Naive thymus-derived CD4-positive, alpha-beta T cell (primary cell): ENCODE measurements at regions of chr6 and their contacts with region 1.

Region 1: DNA sequence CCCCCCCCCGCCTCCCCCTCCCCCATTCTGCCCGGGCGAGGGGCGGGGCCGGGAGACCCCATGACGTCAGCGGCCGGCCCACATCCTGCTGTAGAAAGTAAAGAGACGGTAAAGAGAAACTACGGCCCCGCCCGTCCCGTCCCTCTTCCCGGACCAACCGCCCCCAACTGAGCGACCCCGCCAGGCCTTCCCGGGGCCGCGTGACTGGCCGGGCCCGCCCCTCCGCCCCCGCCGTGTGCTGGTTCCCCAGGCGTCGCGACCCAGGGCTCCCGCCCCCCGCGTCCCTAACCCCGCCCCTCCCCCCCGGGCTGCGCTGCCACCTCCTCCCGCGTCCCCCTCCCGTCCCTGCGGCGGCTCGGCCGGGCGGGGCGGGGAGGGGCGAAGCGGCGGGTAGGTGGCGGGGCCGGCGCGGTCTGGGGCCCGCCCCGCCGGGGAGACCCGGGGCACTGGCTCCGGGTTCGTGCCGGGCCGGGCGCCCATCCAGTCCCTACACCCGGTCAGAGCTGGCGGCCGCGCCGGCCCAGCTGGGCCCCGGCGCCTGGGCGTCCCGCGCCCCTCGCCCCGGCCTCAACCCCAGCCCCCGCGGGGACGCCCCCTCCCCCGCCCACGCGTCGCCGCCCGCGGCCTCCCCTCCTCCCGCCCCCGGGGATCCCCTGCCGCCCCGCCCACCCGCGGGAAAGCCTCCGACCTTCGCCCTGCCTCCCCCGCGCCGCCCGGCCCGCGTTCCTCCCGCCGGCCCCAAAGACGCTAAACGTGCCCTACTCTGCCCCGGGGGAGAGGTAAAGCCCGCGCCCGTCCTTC is 636 bp upstream of the HIVEP1 start:
- DNase-seq: peak; percentile 83 to 99 (median 94)
- ATAC-seq: peak; percentile 83
- H3K4me3 ChIP-seq: no peak overlapping the region
- H3K4me3 Mint-ChIP-seq: peak overlapping the region; percentile 91 to 99 (median 94)
- H3K27ac ChIP-seq: peak overlapping the region; percentile 73
- H3K27ac Mint-ChIP-seq: peak overlapping the region; percentile 97 to 100 (median 98)
- H3K4me1 ChIP-seq: peaks cover 14 to 26% of the 10 kb centered on the region in 2 donors
- H3K4me1 Mint-ChIP-seq: peaks cover 15 to 68% (median 58%) of the 10 kb centered on the region in 7 donors
- H3K27me3 ChIP-seq: no peaks in the 10 kb centered on the region
- H3K27me3 Mint-ChIP-seq: peaks cover 0 to 5% (median 0%) of the 10 kb centered on the region in 5 donors

Region 2: DNA sequence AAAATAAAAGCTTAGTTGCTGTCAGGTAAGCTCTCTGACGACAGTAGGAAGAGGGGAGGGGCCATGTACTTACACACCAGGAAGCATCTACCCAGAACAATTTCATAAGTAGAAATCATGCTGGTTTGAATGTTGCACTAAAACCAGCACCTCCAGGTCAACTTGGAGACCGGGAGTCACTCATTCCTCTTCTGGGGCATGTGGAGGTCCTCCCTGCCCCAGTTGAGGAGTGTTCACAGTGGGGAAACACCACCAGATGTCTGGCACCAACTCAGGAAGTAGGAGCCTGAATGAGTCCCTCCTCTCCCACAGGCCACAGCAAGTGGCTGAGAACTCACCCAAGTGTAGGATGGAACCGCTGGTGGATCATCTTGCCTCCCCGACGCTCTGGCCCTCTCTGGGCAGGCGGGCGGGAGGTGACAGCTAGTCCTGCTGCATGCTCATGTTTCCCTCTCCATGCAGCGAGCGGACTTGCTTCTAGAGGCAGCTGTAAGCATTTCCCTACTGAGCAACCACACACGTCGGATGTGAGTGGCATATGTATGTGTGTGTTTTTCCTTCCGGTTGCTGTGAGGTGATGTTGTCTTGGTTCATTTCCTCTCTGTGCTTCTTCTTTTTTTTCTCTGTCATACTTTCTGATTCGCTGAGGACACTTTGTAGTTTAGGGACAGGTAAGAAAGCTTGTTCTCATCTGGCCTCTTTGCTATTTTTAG is 629.5 kb before region 1 on chr6:
- CTCF ChIA-PET with region 1: no interaction called
- POLR2A ChIA-PET with region 1: no interaction called
- intact Hi-C with region 1: loop called in 1 of 2 experiments (anchors 1 kb)
- DNase-seq: peak; percentile 43 to 88 (median 82)
- ATAC-seq: peak; percentile 95
- H3K4me3 ChIP-seq: peak overlapping the region; percentile 70
- H3K4me3 Mint-ChIP-seq: peak overlapping the region; percentile 76 to 96 (median 91)
- H3K27ac ChIP-seq: peak overlapping the region; percentile 79
- H3K27ac Mint-ChIP-seq: peak overlapping the region; percentile 79 to 94 (median 91)
- H3K4me1 ChIP-seq: peaks cover 23 to 28% of the 10 kb centered on the region in 2 donors
- H3K4me1 Mint-ChIP-seq: peaks cover 42 to 85% (median 66%) of the 10 kb centered on the region in 7 donors
- H3K27me3 ChIP-seq: no peaks in the 10 kb centered on the region
- H3K27me3 Mint-ChIP-seq: no peaks in the 10 kb centered on the region

Region 3: DNA sequence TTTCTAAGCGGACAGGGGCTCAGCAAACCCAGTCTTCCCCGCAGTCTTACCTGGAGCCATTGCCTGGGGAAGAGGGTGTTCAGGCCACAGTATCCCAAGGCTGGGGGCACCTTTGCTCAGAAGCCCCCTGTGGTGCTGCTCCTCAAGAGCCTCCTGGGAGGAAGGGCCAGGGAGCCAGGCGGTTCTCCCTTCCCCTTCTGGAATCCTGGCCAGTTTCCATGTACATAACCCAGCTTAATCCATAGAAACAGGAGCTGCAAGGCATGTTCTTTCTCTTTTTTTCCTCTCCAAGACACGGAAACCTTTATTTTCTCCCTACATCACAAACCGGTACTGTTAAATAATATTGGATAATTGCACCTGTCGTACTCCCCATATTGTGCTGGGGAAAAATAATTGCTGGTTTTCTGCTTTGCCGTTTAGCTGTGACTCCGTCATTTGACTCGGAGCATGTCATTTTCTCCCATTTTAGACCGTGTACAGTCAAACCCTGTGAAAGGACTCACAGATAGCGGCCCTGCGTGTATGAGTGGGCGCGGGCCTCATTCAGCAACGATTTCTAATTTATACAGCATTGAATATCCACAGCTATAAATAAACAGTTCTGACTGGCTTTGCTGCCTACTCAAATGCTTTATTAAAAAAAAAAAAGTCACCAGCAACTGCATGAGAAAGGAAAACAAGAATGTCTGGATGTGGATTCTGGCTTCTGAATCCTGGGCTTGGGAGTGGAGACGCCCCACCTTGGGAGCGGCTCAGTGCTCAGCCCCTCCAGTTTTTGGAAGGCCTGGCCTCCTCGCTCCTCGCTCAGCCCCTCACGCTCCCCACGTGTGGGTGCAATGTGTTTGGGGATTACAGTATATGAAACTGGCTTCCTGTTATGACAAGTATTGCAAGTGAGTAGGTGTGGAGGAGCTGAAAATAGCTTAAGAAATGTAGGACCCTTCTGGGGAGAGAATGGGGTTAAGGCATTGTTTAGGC is 300.2 kb before region 1 on chr6:
- CTCF ChIA-PET with region 1: interaction called, 4 read pairs
- POLR2A ChIA-PET with region 1: interaction called, 83 read pairs
- intact Hi-C with region 1: loop called (anchors 1 kb)
- DNase-seq: peak in 8 of 9 donors; percentile 22 to 79 (median 38)
- ATAC-seq: peak; percentile 28
- H3K4me3 ChIP-seq: peak overlapping the region; percentile 13
- H3K4me3 Mint-ChIP-seq: peak overlapping the region; percentile 71 to 86 (median 75)
- H3K27ac ChIP-seq: peak overlapping the region; percentile 67
- H3K27ac Mint-ChIP-seq: peak overlapping the region; percentile 90 to 100 (median 97)
- H3K4me1 ChIP-seq: peaks cover 16 to 84% of the 10 kb centered on the region in 2 donors
- H3K4me1 Mint-ChIP-seq: peaks cover 55 to 92% (median 89%) of the 10 kb centered on the region in 7 donors
- H3K27me3 ChIP-seq: no peaks in the 10 kb centered on the region
- H3K27me3 Mint-ChIP-seq: no peaks in the 10 kb centered on the region

Region 4: GRCh38 chr6:11975353-11975977 is 36.0 kb before region 1 on chr6:
- CTCF ChIA-PET with region 1: no interaction called
- POLR2A ChIA-PET with region 1: no interaction called
- intact Hi-C with region 1: loop called (anchors 1 kb)
- DNase-seq: peak in 1 of 9 donors; percentile 7
- ATAC-seq: peak; percentile 97
- H3K4me3 ChIP-seq: no peak overlapping the region
- H3K4me3 Mint-ChIP-seq: peak overlapping the region in 7 of 10 donors; percentile 8 to 73 (median 53)
- H3K27ac ChIP-seq: no peak overlapping the region
- H3K27ac Mint-ChIP-seq: peak overlapping the region in 7 of 9 donors; percentile 1 to 53 (median 23)
- H3K4me1 ChIP-seq: no peaks in the 10 kb centered on the region
- H3K4me1 Mint-ChIP-seq: peaks cover 7 to 40% (median 21%) of the 10 kb centered on the region in 7 donors
- H3K27me3 ChIP-seq: no peaks in the 10 kb centered on the region
- H3K27me3 Mint-ChIP-seq: peaks cover 0 to 2% (median 0%) of the 10 kb centered on the region in 5 donors

Region 5: DNA sequence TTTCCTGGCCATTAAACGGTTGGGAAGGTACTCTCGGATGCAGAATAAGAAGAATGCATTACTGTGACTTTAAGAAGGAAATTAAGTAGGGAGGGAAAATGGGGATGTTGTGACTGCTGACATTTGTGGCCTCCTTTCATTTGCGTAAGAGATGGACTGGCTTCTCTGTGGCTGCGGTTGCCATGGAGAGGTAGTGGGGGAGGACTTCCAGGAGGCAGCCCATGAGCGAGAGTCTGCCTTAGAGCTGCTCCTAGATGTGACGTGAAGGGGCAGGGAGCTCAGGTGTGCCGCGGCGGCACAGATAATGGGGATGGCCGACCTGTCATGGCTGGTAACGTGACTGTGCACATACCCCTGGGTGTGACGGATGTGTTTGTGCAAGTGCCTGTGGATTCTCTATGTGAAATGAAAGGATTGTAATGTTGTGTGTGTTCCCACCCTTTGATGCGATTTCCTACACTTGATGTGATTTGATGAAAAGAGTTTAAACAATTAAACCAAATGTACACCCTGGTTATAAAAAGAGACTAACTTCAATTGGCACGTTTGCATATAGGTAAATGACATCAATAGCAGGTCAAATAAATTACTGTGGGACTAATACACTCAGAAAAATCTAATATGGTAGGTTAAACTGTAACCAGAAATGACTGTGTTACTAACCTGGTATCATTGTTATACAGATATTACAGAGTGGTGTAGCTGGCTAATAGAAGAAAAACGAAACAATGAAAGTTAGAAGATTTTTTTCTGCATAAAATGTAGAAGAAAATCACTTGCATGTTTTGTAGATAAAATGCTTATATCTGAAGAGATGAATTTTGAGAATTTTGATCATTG is 49.5 kb after region 1 on chr6:
- CTCF ChIA-PET with region 1: interaction called, 4 read pairs
- POLR2A ChIA-PET with region 1: interaction called, 3 read pairs
- intact Hi-C with region 1: loop called in 1 of 2 experiments (anchors 1 kb)
- DNase-seq: peak; percentile 44 to 90 (median 76)
- ATAC-seq: peak; percentile 97
- H3K4me3 ChIP-seq: peak overlapping the region; percentile 24
- H3K4me3 Mint-ChIP-seq: peak overlapping the region; percentile 77 to 94 (median 84)
- H3K27ac ChIP-seq: peak overlapping the region; percentile 5
- H3K27ac Mint-ChIP-seq: peak overlapping the region in 8 of 9 donors; percentile 75 to 95 (median 88)
- H3K4me1 ChIP-seq: peaks cover 6 to 10% of the 10 kb centered on the region in 2 donors
- H3K4me1 Mint-ChIP-seq: peaks cover 42 to 78% (median 71%) of the 10 kb centered on the region in 7 donors
- H3K27me3 ChIP-seq: no peaks in the 10 kb centered on the region
- H3K27me3 Mint-ChIP-seq: no peaks in the 10 kb centered on the region

Region 6: DNA sequence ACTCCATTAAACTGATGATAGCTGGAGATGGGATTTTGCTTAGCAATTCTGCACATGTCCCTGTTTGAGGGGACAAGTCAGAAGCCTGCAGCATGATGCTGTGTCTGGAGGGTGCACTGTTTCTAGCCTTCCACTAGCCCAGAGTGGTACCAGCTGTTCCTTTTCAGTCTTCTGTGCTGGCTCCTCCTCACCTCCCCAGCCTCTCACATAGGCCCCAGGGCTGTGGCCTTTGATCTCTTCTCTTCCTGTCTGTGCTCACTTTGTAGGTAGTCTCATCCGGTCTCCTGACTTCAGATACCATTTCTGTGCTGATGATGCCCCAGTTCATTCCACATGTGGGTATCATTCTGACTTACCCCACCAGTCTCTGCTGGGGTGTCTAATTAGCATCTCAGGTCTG is 126.9 kb after region 1 on chr6:
- CTCF ChIA-PET with region 1: no interaction called
- POLR2A ChIA-PET with region 1: no interaction called
- intact Hi-C with region 1: loop called in 1 of 2 experiments (anchors 1 kb)
- DNase-seq: peak in 7 of 9 donors; percentile 54 to 80 (median 75)
- ATAC-seq: peak; percentile 99
- H3K4me3 ChIP-seq: no peak overlapping the region
- H3K4me3 Mint-ChIP-seq: peak overlapping the region in 9 of 10 donors; percentile 2 to 79 (median 51)
- H3K27ac ChIP-seq: no peak overlapping the region
- H3K27ac Mint-ChIP-seq: peak overlapping the region; percentile 12 to 90 (median 79)
- H3K4me1 ChIP-seq: peaks cover 4 to 19% of the 10 kb centered on the region in 2 donors
- H3K4me1 Mint-ChIP-seq: peaks cover 19 to 44% (median 35%) of the 10 kb centered on the region in 7 donors
- H3K27me3 ChIP-seq: no peaks in the 10 kb centered on the region
- H3K27me3 Mint-ChIP-seq: no peaks in the 10 kb centered on the region